Mammary epithelial cell (primary cell): ENCODE measurements at regions of chr17 and their contacts with region 1.

Region 1: DNA sequence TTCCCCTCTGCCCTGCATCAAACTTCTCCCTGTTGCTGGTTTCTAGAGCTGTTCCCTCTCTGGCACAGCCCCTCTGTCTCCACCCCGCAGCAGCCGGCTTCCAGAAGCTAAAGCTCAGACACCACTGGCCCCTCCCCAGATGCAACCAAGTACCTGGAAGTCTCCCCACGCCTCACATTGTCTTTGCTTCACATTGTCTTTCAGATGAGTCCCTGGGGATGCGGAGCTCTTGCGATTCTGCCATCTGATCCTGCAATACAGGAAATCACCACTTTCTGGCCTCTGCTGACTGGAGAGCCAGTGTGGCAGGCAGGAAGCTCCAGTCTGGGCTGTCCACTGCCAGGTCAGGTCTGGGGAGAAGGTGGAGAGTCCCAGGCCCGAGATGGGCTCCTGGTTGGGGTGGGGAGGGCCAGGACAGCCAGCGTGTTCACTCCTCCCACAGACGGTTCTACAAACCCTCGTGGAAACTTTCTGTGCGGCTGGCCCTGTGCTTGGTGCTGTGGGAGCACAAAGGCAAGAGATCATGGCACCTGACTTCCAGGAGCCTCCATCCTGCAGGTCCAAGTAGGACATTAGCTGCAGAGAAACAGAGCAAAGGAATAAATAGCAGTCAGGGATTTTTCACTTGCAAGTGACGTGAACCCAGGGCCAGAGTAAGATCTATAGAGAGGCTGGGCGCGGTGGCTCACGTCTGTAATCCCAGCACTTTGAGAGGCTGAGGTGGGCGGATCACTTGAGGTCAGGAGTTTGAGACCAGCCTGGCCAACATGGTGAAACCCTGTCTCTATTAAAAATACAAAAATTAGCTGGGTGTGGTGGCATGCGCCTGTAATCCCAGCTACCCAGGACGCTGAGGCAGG is 47.9 kb upstream of the MAP3K14 start:
- DNase-seq: no peak
- H3K4me3 ChIP-seq: no peak overlapping the region
- H3K27ac ChIP-seq: no peak overlapping the region
- H3K4me1 ChIP-seq: no peaks in the 10 kb centered on the region
- H3K27me3 ChIP-seq: no peaks in the 10 kb centered on the region
- CTCF ChIP-seq: no peak

Region 2: DNA sequence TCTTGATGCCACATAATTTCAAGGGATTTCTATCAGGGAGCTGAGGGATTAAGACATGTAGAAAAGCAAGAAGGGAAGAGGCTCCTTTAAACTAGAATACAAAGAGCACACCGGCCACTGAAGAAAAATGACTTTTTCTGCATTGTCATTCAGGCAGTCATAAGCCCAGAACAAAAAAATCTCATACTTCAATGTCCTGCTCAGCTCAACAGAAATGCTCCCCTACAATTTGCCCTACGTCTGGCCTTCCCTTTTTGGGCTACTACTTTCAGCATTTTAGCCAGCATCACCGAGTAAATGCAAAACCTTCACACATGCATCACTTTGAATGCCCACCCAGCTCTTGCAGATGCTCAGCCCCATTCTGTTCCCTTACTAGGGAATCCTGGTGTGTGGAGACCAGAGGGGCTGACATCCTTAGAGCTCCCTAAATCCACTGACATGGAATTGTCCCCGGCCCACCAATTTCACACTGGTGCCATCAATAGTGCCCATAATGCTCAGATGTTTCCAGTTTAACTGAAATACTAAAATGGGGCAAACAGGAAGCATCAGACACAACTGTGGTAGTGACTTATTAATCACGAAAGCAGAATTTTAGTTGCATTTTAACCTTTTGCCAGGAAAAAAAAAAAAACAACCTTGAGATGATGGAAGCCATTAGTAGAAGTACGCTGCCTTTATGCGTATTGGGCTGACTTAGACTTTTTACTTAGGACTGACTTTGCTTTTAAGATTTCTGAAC is 50.6 kb before region 1 on chr17:
- CTCF ChIA-PET with region 1: no interaction called
- dilution Hi-C with region 1: no loop called
- in situ Hi-C with region 1: no loop called
- intact Hi-C with region 1: no loop called
- DNase-seq: no peak
- H3K4me3 ChIP-seq: peak overlapping the region; percentile 56 to 80 (median 78)
- H3K27ac ChIP-seq: peak overlapping the region; percentile 24
- H3K4me1 ChIP-seq: peaks cover 62% of the 10 kb centered on the region
- H3K27me3 ChIP-seq: no peaks in the 10 kb centered on the region
- CTCF ChIP-seq: no peak

Region 3: GRCh38 chr17:45385331-45385997 is 20.7 kb after region 1 on chr17:
- CTCF ChIA-PET with region 1: no interaction called
- dilution Hi-C with region 1: no loop called
- in situ Hi-C with region 1: no loop called
- intact Hi-C with region 1: no loop called
- DNase-seq: peak; percentile 70
- H3K4me3 ChIP-seq: no peak overlapping the region
- H3K27ac ChIP-seq: no peak overlapping the region
- H3K4me1 ChIP-seq: peaks cover 30% of the 10 kb centered on the region
- H3K27me3 ChIP-seq: no peaks in the 10 kb centered on the region
- CTCF ChIP-seq: peak; percentile 98 to 99

Region 4: DNA sequence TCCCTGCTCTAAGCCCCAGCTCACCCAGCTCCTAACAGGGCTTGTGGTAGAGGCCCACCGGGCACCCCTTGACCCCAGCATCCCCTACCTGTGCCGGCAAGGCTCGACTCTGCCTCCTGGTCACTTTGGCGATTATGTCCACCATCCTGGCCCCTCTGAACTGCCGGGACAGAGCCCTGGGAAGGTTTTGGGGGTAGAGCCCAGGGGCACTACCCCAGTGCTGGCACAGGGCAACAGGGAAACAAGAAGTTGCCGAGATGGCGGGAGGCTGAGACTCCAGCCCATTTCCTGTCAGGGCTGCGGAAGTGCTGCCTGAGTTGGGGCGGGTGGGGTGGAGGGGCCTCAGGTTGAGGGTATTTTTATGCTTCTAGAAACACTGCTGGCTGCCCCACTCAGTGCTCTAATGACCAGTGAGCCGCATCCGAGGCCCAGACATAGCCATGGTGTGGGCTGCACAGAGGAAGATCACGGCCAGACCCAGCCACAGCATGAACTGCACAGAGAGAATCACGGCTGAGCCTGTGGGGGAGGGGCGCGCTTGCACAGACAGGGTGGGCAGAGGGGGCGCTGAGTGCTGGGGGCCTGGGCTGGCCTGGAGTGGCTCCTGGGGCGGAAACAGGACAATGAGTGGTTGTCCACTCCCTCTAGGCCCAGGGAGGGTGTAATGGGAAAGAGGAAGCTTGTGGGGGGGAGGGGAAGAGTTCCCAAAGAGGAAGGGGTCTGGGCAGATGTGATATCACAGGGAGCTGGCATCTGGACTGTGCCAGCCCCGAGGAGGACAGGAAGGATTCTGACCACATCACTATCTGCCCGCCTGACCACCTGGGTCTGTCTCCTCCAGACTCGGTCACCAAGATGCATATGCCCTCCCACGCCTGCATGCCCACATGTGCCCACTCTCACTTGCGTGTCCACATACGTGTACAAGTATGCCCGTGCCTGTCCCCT is 45.7 kb after region 1 on chr17:
- CTCF ChIA-PET with region 1: no interaction called
- dilution Hi-C with region 1: loop called (anchors 5 kb)
- in situ Hi-C with region 1: no loop called
- intact Hi-C with region 1: no loop called
- DNase-seq: no peak
- H3K4me3 ChIP-seq: no peak overlapping the region
- H3K27ac ChIP-seq: no peak overlapping the region
- H3K4me1 ChIP-seq: no peaks in the 10 kb centered on the region
- H3K27me3 ChIP-seq: no peaks in the 10 kb centered on the region
- CTCF ChIP-seq: no peak

Region 5: GRCh38 chr17:45451141-45451540 is 86.4 kb after region 1 on chr17:
- CTCF ChIA-PET with region 1: no interaction called
- dilution Hi-C with region 1: no loop called
- in situ Hi-C with region 1: no loop called
- intact Hi-C with region 1: no loop called
- DNase-seq: no peak
- H3K4me3 ChIP-seq: no peak overlapping the region
- H3K27ac ChIP-seq: no peak overlapping the region
- H3K4me1 ChIP-seq: peaks cover 21% of the 10 kb centered on the region
- H3K27me3 ChIP-seq: no peaks in the 10 kb centered on the region
- CTCF ChIP-seq: no peak